WTC11 (cell line): ENCODE measurements at regions of chr7 and their contacts with region 1.

Region 1: DNA sequence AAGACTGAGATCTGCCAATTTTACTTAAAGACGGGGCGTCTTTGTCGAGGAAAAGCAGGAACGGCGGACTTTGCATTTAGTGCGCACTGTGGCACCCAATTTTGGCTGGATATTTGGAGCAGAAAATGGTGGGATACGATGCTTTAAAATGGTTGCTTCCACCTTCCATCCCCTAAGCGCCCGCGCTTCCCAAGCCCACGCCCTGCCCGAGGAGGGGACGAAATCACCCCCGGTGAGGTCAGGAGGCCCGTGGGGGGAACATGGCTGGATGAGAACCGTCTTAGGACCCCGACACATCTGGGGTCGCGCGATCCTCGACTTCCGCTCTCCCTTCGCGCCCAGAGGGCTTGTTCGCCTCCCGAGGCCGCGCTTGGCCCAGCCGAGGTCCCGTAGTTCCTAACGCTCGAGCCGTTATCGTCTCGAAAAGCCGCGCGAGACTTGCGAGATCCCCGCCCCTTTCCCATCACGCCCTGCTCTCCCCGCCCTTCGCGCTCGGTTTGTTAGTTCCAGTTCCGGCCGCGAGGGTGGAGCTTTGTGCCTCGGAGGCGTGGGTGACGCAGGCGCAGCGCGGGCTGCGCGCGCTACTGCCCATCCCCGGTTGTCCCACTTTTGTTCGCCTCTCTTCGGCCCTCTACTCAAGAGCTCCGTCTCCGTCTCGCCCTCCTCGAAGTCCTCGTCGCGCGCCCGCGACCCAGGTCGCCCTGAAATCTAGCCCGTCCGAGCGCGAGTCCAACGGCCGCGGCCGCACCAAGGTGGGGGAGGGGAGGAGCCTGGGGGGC is at the start of gene SRRT:
- DNase-seq: peak; percentile 98
- ATAC-seq: peak; percentile 94
- H3K4me3 Mint-ChIP-seq: peak within 1 kb of the TSS; percentile 98
- H3K27ac Mint-ChIP-seq: peak within 1 kb of the TSS; percentile 99
- H3K4me1 Mint-ChIP-seq: peaks cover 19% of the 10 kb centered on the region
- H3K27me3 Mint-ChIP-seq: no peaks in the 10 kb centered on the region
- CTCF ChIP-seq: no peak
- total RNA-seq, gene SRRT: 209 to 238 TPM (median 233 TPM) in 3 replicates

Region 2: DNA sequence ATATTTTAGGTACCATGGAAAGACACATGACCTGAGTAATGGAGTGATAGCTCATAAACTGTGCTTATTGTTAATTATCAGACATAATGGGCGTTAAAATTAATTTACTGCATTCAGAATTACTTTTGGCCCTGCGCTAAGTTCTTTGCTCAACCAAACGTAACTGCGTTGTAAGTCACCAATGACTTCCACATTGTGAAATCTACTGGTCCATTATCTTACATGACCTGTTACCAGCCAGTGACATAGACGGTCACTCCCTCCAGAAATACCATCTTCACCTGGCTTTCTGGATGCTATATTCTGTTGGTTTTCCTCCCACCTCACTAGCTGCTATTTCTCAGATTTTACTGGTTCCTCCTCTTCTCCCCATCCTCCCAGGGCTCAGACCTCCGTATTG is 175.7 kb before region 1 on chr7:
- CTCF ChIA-PET with region 1: no interaction called
- POLR2A ChIA-PET with region 1: no interaction called
- DNase-seq: no peak
- ATAC-seq: no peak
- H3K4me3 Mint-ChIP-seq: no peak overlapping the region
- H3K27ac Mint-ChIP-seq: no peak overlapping the region
- H3K4me1 Mint-ChIP-seq: peaks cover 24% of the 10 kb centered on the region
- H3K27me3 Mint-ChIP-seq: no peaks in the 10 kb centered on the region
- CTCF ChIP-seq: no peak

Region 3: DNA sequence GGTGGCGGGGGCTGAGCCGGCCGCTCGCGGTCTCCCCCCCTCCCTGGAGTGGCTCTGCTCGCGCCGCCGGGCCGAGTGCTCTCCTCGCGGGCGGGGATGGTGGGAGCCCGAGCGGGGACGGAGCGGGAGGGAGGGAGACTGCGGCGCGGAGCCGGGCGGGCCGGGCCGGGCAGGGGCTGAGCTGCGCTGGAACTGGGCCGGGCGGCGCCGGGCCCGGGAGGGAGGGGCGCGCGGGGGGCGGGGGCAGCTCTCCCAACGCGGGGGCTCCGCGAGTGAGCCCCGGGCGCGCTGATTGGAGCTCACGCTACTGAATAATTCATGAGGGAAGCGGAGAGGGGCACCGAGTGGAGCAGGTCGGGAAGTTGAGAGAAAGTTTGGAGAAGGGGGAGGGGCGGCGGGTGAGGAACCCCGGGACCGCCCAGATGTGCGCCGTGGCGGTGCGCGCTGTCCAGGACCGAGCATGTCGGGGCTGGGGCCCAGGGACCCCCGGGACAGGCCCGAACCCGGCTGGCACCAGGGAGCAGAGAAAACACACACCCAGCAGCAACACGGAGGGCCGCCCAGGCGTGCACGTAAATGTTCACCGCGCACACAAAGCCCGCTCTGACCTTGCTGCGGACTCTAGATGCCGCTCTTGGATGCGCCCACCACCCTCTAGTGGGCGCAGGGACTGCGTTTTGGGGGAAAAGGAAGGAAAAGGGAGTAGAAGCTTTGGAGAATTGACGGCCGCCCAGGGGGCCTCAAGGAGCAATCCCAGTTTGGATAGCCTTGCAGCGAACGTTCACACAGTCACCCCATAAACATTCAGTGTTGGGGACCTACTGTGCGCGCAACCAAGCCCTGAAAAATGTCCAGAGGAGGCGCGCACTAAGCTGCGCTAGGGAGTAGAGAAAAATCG is 47.2 kb before region 1 on chr7 and contains the start of gene EPHB4:
- CTCF ChIA-PET with region 1: interaction called, 9 read pairs
- POLR2A ChIA-PET with region 1: interaction called, 12 read pairs
- DNase-seq: peak; percentile 90
- ATAC-seq: peak; percentile 82
- H3K4me3 Mint-ChIP-seq: peak within 1 kb of the TSS; percentile 98
- H3K27ac Mint-ChIP-seq: peak within 1 kb of the TSS; percentile 99
- H3K4me1 Mint-ChIP-seq: peaks cover 28% of the 10 kb centered on the region
- H3K27me3 Mint-ChIP-seq: no peaks in the 10 kb centered on the region
- CTCF ChIP-seq: no peak
- total RNA-seq, gene EPHB4: 99.7 to 120 TPM (median 104 TPM) in 3 replicates